Panc1 (cell line): ENCODE measurements at regions of chr10 and their contacts with region 1.

Region 1: GRCh38 chr10:119703903-119704508 is 21.8 kb upstream of the INPP5F start:
- DNase-seq: no peak
- ATAC-seq: no peak
- H3K4me3 ChIP-seq: no peak overlapping the region
- H3K27ac ChIP-seq: no peak overlapping the region
- H3K4me1 ChIP-seq: 0 out of 2 replicates have a peak, but pooled peaks cover 3% of the 10 kb centered on the region
- H3K27me3 ChIP-seq: no peaks in the 10 kb centered on the region
- CTCF ChIP-seq: no peak

Region 2: DNA sequence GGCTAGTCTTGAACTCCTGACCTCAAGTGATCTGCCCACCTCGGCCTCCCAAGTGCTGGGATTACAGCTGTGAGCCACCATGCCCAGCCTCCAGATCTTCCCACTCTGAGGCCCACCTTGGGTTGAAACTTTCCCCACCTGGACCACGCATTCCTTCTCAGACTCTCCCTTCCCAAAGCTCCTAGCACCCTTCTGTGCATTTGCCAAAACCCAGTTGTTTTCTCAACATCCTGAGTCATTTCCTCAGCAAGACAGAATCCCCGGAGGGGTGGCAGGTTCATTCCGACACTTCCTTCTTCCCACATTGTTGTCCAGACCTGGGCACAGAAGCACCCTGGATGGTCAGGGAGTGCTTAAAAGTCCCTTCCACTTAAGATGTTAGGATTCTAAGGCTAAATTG is 24.0 kb before region 1 on chr10:
- CTCF ChIA-PET with region 1: no interaction called
- POLR2A ChIA-PET with region 1: no interaction called
- in situ Hi-C with region 1: no loop called
- intact Hi-C with region 1: no loop called
- DNase-seq: no peak
- ATAC-seq: peak; percentile 77
- H3K4me3 ChIP-seq: 0 out of 4 replicates have a peak overlapping the region, but pooled peaks of 1 of the 2 experiments have one; percentile 0
- H3K27ac ChIP-seq: peak overlapping the region; percentile 87
- H3K4me1 ChIP-seq: peaks cover 67% of the 10 kb centered on the region
- H3K27me3 ChIP-seq: no peaks in the 10 kb centered on the region
- CTCF ChIP-seq: no peak

Region 3: GRCh38 chr10:119693262-119693957 is 10.6 kb before region 1 on chr10:
- CTCF ChIA-PET with region 1: interaction called, 4 read pairs
- POLR2A ChIA-PET with region 1: interaction called, 17 read pairs
- in situ Hi-C with region 1: no loop called
- intact Hi-C with region 1: no loop called
- DNase-seq: no peak
- ATAC-seq: no peak
- H3K4me3 ChIP-seq: no peak overlapping the region
- H3K27ac ChIP-seq: no peak overlapping the region
- H3K4me1 ChIP-seq: no peaks in the 10 kb centered on the region
- H3K27me3 ChIP-seq: no peaks in the 10 kb centered on the region
- CTCF ChIP-seq: no peak